Activated T-helper 1 cell treated with anti-CD3 and anti-CD28 coated beads, Interleukin-12 subunit alpha, Interleukin-12 subunit beta, Interleukin-2, Interleukin-4 antibody, amounts not matched to agents 30 ng/mL and 10 ng/mL and 1 ng/mL, durations not matched to agents 14 hours and 24 hours and 36 hours (primary cell): ENCODE measurements at regions of chr1 and their contacts with region 1.

Region 1: DNA sequence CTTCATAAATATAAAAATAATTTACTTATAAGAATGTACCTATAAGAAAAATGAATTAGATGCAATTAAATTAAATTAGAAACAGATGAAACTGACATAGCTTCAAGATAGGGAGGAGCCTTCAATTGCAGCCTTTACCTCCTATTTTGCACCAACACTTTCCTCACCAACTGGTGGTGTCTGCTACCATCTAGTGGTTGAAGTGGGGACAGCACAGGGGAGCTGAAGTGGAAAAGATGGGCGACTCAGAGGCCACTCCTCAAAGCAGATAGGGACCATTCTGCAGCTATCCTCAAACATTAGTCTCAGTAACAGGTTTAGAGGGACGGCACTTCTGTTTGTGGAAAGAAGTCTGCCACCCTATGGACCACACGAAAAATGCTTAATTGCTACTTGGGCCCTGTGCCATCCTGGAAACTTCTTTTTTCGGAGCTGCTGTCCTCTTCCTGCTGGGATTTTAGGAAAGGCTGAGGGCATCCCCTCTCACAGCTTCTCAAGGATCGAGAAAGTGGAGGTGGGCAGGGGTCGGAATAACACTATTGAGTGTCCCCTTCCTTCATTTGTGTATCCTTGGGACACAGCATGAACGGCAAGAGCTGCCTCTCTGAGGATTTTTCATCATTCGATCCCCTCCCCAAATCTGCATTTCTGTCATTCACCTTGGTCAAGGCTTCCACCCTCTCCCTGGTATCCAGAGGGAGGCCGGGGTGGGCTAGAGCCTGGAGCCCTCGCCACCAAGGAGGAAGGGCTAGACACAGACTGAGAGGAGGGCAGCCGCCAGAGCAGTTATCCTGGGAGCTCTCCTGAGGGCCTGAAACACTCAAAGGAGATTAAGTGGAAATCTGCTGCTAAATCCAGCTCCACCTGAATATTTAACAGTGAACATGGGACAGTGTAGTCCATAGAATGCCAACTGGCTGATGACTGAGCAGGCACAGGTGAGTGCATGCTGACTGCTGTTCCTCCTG is 9.6 kb downstream of the PROK1 start:
- DNase-seq: peak; percentile 77
- H3K4me3 Mint-ChIP-seq: no peak overlapping the region
- H3K27ac Mint-ChIP-seq: no peak overlapping the region
- H3K4me1 Mint-ChIP-seq: no peaks in the 10 kb centered on the region
- H3K27me3 Mint-ChIP-seq: no peaks in the 10 kb centered on the region

Region 2: GRCh38 chr1:110196917-110197765 is 263.4 kb before region 1 on chr1:
- intact Hi-C with region 1: loop called (anchors 1 kb)
- DNase-seq: peak; percentile 40
- H3K4me3 Mint-ChIP-seq: no peak overlapping the region
- H3K27ac Mint-ChIP-seq: no peak overlapping the region
- H3K4me1 Mint-ChIP-seq: no peaks in the 10 kb centered on the region
- H3K27me3 Mint-ChIP-seq: peaks cover 2% of the 10 kb centered on the region

Region 3: DNA sequence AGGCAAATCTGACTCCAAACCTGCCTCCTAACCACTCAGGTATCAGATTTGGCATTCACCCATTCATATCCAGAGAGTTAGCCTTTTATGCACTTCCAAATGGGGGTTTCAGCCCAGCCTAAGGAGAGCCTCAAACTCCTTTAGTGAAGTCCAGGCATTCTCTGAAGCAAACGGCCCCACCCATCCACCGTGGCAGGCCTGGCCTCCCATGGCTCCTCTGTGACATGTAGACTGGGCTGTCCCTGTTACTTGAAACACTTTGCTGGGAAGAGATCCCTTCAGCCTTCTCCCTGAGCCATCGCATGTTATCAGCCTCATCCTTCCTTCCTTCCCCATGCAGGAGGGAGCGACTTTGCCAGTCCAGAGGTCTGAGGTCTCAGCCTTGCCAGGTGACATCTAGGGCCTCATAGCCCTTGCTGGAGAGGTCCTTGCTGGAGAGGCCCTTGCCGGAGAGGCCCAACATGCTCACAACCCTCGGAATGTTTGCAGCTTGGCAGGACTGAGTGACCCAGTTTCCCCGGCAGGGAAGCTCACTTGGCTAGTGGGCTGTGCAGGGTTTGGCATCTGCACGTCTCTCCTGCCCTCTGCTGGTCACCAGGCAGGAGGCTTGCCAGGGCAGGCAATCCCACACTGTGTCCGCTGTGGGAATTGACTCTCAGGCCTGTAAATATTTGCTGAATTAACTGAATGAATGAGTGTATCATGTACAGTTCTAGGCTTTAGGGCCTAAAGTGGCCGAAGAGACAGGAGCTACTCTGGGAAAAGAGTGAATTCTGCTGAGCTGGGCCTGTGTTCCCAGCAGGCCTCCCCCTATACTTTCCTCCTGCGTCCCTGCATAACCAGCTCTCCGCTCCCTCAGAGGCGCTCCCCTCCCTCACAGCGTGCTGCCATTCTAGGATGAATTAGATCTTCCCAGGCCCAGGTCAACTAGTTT is 148.1 kb before region 1 on chr1:
- intact Hi-C with region 1: loop called (anchors 1 kb)
- DNase-seq: peak; percentile 46
- H3K4me3 Mint-ChIP-seq: no peak overlapping the region
- H3K27ac Mint-ChIP-seq: no peak overlapping the region
- H3K4me1 Mint-ChIP-seq: no peaks in the 10 kb centered on the region
- H3K27me3 Mint-ChIP-seq: no peaks in the 10 kb centered on the region

Region 4: DNA sequence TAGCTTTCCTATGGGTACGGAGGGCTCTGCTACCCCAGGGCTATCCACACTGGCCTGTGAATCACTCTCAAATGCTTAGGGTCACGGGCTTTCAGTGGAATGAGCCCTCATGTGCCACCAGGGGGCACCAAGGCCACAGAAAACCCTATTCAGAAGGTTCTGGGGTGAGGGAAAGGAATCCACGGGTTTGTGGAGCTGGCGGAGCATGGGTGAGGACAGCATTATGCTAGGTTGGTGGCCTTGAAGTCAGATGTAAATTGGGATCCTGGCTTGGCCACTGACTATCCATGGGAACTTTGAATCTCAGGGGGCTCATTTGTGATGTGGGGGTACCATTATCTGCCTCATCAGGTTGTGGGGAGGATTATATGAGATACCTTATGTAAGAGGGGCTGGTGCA is 48.0 kb before region 1 on chr1:
- intact Hi-C with region 1: loop called (anchors 1 kb)
- DNase-seq: peak; percentile 46
- H3K4me3 Mint-ChIP-seq: no peak overlapping the region
- H3K27ac Mint-ChIP-seq: no peak overlapping the region
- H3K4me1 Mint-ChIP-seq: peaks cover 13% of the 10 kb centered on the region
- H3K27me3 Mint-ChIP-seq: peaks cover 5% of the 10 kb centered on the region

Region 5: GRCh38 chr1:110482662-110483307 is 22.2 kb after region 1 on chr1:
- intact Hi-C with region 1: no loop called
- DNase-seq: no peak
- H3K4me3 Mint-ChIP-seq: no peak overlapping the region
- H3K27ac Mint-ChIP-seq: no peak overlapping the region
- H3K4me1 Mint-ChIP-seq: no peaks in the 10 kb centered on the region
- H3K27me3 Mint-ChIP-seq: peaks cover 13% of the 10 kb centered on the region